K562 (cell line): ENCODE measurements at regions of chr7 and their contacts with region 1.

Region 1: GRCh38 chr7:107494315-107494751 is 24.5 kb downstream of the GPR22 start:
- DNase-seq: no peak
- ATAC-seq: peak; percentile 8; the same call in 1 of the 3 replicates
- H3K4me3 ChIP-seq: no peak overlapping the region
- H3K27ac ChIP-seq: no peak overlapping the region
- H3K4me1 ChIP-seq: peaks cover 0 to 15% of the 10 kb centered on the region in 2 experiments; a peak in 3 of 5 replicates
- H3K27me3 ChIP-seq: no peaks in the 10 kb centered on the region
- CTCF ChIP-seq: no peak
- EP300 ChIP-seq: no peak
- POLR2A ChIP-seq: no peak
- RAD21 ChIP-seq: no peak

Region 2: GRCh38 chr7:106793015-106793975 is 701.0 kb before region 1 on chr7:
- CTCF ChIA-PET with region 1: no interaction called
- POLR2A ChIA-PET with region 1: no interaction called
- in situ Hi-C with region 1: no loop called
- intact Hi-C with region 1: loop called (anchors 10 kb)
- DNase-seq: peak; percentile 59 to 78 (median 63)
- ATAC-seq: peak; percentile 53
- H3K4me3 ChIP-seq: no peak overlapping the region
- H3K27ac ChIP-seq: no peak overlapping the region
- H3K4me1 ChIP-seq: peaks cover 0 to 5% of the 10 kb centered on the region in 2 experiments; a peak in 1 of 5 replicates
- H3K27me3 ChIP-seq: no peaks in the 10 kb centered on the region
- CTCF ChIP-seq: peak; percentile 59 to 93 (median 74); a peak in 5 of 6 replicates
- EP300 ChIP-seq: no peak
- POLR2A ChIP-seq: no peak
- RAD21 ChIP-seq: peak; percentile 91 to 94

Region 3: DNA sequence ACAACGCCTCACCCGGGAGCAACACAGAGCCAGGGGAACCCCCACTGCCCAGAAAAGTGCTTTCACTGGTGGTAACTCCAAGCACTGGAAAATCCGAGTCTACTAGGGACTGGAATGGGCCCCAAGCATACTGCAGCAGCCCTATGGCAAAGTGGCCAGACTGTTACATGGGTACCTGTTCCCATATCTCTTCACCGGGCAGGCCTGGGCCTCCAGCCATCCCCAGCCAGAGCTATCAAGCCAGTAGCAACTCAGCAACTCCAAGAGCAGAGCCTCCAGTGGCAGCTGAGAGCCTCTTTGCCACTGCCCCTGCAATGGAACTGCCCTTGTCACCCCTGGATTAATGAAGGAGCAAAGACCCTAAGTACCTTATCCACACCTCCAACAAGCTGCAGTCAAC is 252.1 kb before region 1 on chr7:
- CTCF ChIA-PET with region 1: no interaction called
- POLR2A ChIA-PET with region 1: no interaction called
- in situ Hi-C with region 1: no loop called
- intact Hi-C with region 1: no loop called
- DNase-seq: no peak
- ATAC-seq: no peak
- H3K4me3 ChIP-seq: no peak overlapping the region
- H3K27ac ChIP-seq: no peak overlapping the region
- H3K4me1 ChIP-seq: no peaks in the 10 kb centered on the region; a peak in 2 of 5 replicates
- H3K27me3 ChIP-seq: no peaks in the 10 kb centered on the region
- CTCF ChIP-seq: no peak
- EP300 ChIP-seq: no peak
- POLR2A ChIP-seq: no peak
- RAD21 ChIP-seq: no peak

Region 4: DNA sequence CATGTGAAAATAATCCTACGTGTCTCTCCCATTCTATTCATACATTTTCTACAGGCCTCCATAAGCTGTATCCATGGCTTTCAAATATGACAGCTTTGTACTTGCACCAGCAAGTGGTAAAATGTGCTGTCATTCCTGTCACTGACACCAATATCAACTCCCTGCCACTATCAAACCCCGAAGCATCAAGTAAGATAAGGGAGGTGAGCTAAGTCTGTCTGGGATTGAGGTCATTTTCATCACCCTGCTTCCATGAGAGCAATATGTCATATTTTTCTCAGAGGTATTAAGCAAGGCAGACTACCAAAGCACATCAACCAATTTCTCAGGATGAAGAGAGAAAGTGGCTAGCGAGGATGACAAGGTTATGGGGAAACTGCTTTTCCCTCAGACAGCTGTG is 13.4 kb before region 1 on chr7:
- CTCF ChIA-PET with region 1: no interaction called
- POLR2A ChIA-PET with region 1: interaction called, 11 read pairs
- in situ Hi-C with region 1: no loop called
- intact Hi-C with region 1: no loop called
- DNase-seq: peak in 3 of 4 experiments; percentile 20 to 47 (median 37)
- ATAC-seq: peak; percentile 84
- H3K4me3 ChIP-seq: no peak overlapping the region
- H3K27ac ChIP-seq: no peak overlapping the region; the same call in 2 of the 3 replicates
- H3K4me1 ChIP-seq: peaks cover 0 to 8% of the 10 kb centered on the region in 2 experiments; a peak in 2 of 5 replicates
- H3K27me3 ChIP-seq: no peaks in the 10 kb centered on the region
- CTCF ChIP-seq: no peak
- EP300 ChIP-seq: peak; percentile 69
- POLR2A ChIP-seq: no peak
- RAD21 ChIP-seq: no peak